Heart left ventricle (tissue), 16 donors: ENCODE measurements at regions of chrX and their contacts with region 1.

Region 1: GRCh38 chrX:139932901-139933796 is at the start of gene ATP11C:
- DNase-seq: peak; percentile 80 to 87 (median 85)
- ATAC-seq: peak; percentile 93 to 99 (median 96)
- H3K4me3 ChIP-seq: peak within 1 kb of the TSS; percentile 52 to 97 (median 77)
- H3K27ac ChIP-seq: peak within 1 kb of the TSS; percentile 82 to 97 (median 91)
- H3K4me1 ChIP-seq: peaks cover 0 to 10% (median 0%) of the 10 kb centered on the region in 12 donors
- H3K27me3 ChIP-seq: peaks cover 0 to 14% (median 0%) of the 10 kb centered on the region in 9 donors
- CTCF ChIP-seq: peak in 5 of 12 donors; percentile 3 to 30 (median 14)
- POLR2A ChIP-seq: peak in 1 of 2 donors; percentile 59
- total RNA-seq, gene ATP11C: 2.1 to 10.2 (median 4.6) TPM

Region 2: DNA sequence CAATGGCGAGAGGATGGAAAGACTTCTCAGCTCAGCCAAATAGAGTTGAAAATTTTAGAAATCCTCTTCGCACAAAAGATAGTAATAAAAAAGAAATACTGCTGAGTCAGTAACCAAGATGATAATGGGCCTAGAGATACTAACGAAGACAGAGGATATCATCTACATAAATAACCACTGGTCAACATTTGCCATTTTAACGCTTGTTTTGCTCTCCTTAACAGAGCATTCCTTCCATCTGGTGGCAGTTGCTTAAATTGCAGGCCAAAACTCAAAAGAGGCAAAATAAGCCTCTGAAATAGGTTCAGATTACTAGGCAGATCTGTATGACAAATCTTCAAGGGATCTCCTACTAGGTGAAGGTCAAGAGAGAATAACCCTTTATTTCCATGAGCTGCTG is 173.5 kb before region 1 on chrX:
- intact Hi-C with region 1: loop called in 1 of 10 experiments (anchors 10 kb)
- DNase-seq: no peak
- ATAC-seq: no peak
- H3K4me3 ChIP-seq: no peak overlapping the region
- H3K27ac ChIP-seq: no peak overlapping the region
- H3K4me1 ChIP-seq: no peaks in the 10 kb centered on the region
- H3K27me3 ChIP-seq: no peaks in the 10 kb centered on the region
- CTCF ChIP-seq: peak in 8 of 12 donors; percentile 11 to 42 (median 33)
- POLR2A ChIP-seq: no peak

Region 3: GRCh38 chrX:139826065-139827044 is 106.8 kb before region 1 on chrX:
- intact Hi-C with region 1: loop called in 3 of 10 experiments (anchors 5 to 10 kb)
- DNase-seq: no peak
- ATAC-seq: no peak
- H3K4me3 ChIP-seq: no peak overlapping the region
- H3K27ac ChIP-seq: no peak overlapping the region
- H3K4me1 ChIP-seq: peaks cover 0 to 42% (median 12%) of the 10 kb centered on the region in 12 donors
- H3K27me3 ChIP-seq: no peaks in the 10 kb centered on the region
- CTCF ChIP-seq: no peak
- POLR2A ChIP-seq: no peak

Region 4: DNA sequence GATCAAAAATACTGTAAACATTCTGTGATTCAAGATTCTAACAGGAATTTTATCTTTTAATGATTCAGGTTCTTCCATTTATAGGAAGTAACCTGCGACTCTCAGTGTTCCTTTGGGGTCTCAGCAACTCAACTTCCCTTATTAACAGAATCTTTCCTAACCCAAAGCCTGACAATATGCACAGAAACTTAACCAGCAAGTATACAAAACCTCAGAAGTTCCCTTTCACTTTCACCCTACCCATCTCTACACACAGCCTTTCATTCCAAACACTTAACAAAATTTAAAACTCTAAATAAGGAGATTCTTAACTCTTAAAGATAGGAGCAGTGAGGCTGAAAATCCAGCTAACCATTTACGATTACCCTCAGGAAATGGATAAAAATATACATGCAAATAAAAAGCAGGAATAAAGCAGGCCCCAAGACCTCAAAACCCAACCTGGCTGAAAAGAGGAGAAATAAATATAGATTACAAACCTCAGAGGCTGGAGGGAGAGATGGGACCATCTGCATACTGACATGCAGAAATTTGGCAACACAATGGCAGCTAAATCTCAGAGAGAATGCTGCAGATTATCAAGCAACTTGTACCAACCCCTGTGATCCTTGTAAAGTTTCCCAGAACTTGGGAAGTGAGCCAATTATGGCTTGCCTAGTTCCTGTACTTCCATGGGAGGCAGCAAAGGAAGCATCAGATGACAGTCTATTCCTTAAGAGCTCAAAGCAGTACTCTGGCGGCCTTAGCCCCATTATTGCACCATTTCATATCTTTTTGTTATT is 101.3 kb before region 1 on chrX:
- intact Hi-C with region 1: loop called in 3 of 10 experiments (anchors 5 to 10 kb)
- DNase-seq: peak in 1 of 5 donors; percentile 13
- ATAC-seq: peak in 3 of 4 donors; percentile 45 to 70 (median 55)
- H3K4me3 ChIP-seq: no peak overlapping the region
- H3K27ac ChIP-seq: peak overlapping the region in 2 of 12 donors; percentile 14 to 18
- H3K4me1 ChIP-seq: peaks cover 0 to 45% (median 12%) of the 10 kb centered on the region in 12 donors
- H3K27me3 ChIP-seq: no peaks in the 10 kb centered on the region
- CTCF ChIP-seq: no peak
- POLR2A ChIP-seq: no peak

Region 5: DNA sequence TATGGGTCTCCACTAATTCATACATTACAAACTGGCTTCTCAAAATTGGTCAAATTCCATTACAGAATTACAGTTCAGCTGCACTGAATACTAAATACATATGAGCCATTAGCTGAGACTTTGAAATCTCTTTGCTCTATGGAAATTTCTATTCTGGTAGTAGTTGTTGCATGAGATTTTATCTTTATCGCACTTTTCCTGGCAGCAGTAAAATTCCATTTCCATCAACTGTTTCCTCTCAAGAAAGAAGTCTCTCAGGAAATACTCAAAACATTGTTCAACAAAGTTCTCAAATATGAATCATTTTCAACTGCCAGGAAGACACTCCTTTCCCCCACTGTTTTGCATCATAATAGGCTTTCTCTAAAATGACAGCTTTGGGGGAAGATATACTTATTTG is 51.6 kb before region 1 on chrX:
- intact Hi-C with region 1: loop called in 1 of 10 experiments (anchors 2 kb)
- DNase-seq: no peak
- ATAC-seq: peak in 2 of 4 donors; percentile 41
- H3K4me3 ChIP-seq: peak overlapping the region in 1 of 12 donors; percentile 2
- H3K27ac ChIP-seq: peak overlapping the region in 9 of 12 donors; percentile 34 to 71 (median 53)
- H3K4me1 ChIP-seq: peaks cover 0 to 20% (median 5%) of the 10 kb centered on the region in 12 donors
- H3K27me3 ChIP-seq: peaks cover 0 to 3% (median 0%) of the 10 kb centered on the region in 9 donors
- CTCF ChIP-seq: no peak
- POLR2A ChIP-seq: no peak